H1 (cell line): ENCODE measurements at regions of chr3 and their contacts with region 1.

Region 1: DNA sequence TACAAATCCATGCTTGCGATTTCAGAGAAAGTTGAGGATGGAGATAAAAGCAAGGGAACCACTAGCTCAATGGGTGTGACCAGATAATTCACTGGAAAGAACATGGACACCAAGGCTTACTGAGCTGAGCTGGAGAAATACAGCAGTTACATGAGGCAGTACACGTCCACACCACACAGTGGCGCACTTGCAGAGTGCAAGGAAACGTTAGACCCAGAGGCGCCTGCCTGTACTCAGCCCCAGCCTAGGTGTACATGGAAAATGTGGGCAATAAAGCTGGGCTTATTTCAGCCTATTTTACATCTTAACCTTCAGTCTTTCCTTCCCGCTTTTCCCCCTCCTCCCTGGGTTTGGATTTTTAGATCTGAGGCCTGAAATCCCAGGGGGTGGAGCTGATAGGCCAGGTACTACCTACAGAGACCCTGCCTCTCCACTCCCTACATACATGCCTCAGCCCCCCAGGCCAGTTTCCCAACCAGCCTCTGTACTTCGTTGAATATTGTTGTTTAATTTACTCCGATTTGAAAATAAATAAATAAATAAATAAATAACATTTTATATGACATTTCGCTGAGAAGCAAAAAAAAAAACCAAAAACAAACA is 60.1 kb downstream of the PCOLCE2 start:
- DNase-seq: peak; percentile 47 to 92
- H3K4me3 ChIP-seq: no peak overlapping the region
- H3K27ac ChIP-seq: no peak overlapping the region
- H3K4me1 ChIP-seq: no peaks in the 10 kb centered on the region
- H3K27me3 ChIP-seq: no peaks in the 10 kb centered on the region
- CTCF ChIP-seq: peak; percentile 95 to 99 (median 97)
- EP300 ChIP-seq: no peak
- POLR2A ChIP-seq: no peak
- RAD21 ChIP-seq: peak; percentile 97

Region 2: DNA sequence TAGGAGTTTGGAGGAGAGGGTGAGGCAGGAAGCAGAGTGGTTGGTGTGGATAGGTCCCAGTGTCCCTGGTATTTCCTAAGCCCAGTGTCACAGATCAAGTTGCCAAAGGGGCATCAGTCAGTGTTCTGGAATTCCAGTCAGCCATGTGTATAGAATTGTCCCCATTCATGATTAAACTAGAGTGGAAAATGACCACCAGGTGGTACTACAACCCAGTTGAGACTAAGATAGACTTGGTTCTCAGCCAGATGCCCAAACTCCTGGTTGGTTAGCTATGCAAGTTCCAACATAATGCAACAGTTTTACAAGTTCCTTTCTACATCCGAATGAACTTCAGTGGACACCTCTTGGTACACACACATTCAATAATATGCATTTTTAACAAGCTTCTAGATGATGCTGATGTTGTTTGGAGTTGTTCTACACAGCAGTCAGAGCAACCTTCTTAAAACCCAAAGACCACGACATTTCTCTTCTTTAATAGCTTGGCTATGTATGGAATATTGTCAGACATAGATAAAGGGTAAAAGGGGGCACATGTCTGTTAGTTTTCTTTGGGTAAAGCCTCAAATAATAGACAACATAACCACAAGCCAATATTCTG is 241.9 kb before region 1 on chr3:
- CTCF ChIA-PET with region 1: interaction called, 13 read pairs
- POLR2A ChIA-PET with region 1: no interaction called
- DNase-seq: no peak
- H3K4me3 ChIP-seq: no peak overlapping the region
- H3K27ac ChIP-seq: no peak overlapping the region
- H3K4me1 ChIP-seq: no peaks in the 10 kb centered on the region
- H3K27me3 ChIP-seq: no peaks in the 10 kb centered on the region
- CTCF ChIP-seq: peak in 2 of 3 experiments; percentile 71 to 72; a peak in 3 of 4 replicates
- EP300 ChIP-seq: no peak
- POLR2A ChIP-seq: no peak
- RAD21 ChIP-seq: peak; percentile 86 to 92

Region 3: GRCh38 chr3:142768338-142768737 is 60.5 kb before region 1 on chr3:
- CTCF ChIA-PET with region 1: no interaction called
- POLR2A ChIA-PET with region 1: no interaction called
- DNase-seq: no peak
- H3K4me3 ChIP-seq: no peak overlapping the region
- H3K27ac ChIP-seq: no peak overlapping the region
- H3K4me1 ChIP-seq: no peaks in the 10 kb centered on the region
- H3K27me3 ChIP-seq: no peaks in the 10 kb centered on the region
- CTCF ChIP-seq: no peak
- EP300 ChIP-seq: no peak
- POLR2A ChIP-seq: no peak
- RAD21 ChIP-seq: no peak

Region 4: GRCh38 chr3:142817897-142818296 is 10.9 kb before region 1 on chr3:
- CTCF ChIA-PET with region 1: interaction called, 49 read pairs
- POLR2A ChIA-PET with region 1: no interaction called
- DNase-seq: no peak
- H3K4me3 ChIP-seq: no peak overlapping the region
- H3K27ac ChIP-seq: no peak overlapping the region
- H3K4me1 ChIP-seq: no peaks in the 10 kb centered on the region
- H3K27me3 ChIP-seq: no peaks in the 10 kb centered on the region
- CTCF ChIP-seq: no peak
- EP300 ChIP-seq: no peak
- POLR2A ChIP-seq: no peak
- RAD21 ChIP-seq: no peak

Region 5: GRCh38 chr3:142866841-142867631 is 38.2 kb after region 1 on chr3:
- CTCF ChIA-PET with region 1: interaction called, 12 read pairs
- POLR2A ChIA-PET with region 1: interaction called, 4 read pairs
- DNase-seq: peak; percentile 76 to 84
- H3K4me3 ChIP-seq: peak overlapping the region in 2 of 4 experiments; percentile 23 to 48; a peak in 2 of 8 replicates
- H3K27ac ChIP-seq: no peak overlapping the region
- H3K4me1 ChIP-seq: peaks cover 6 to 27% (median 15%) of the 10 kb centered on the region in 4 experiments
- H3K27me3 ChIP-seq: no peaks in the 10 kb centered on the region
- CTCF ChIP-seq: peak in 2 of 3 experiments; percentile 53 to 71; a peak in 3 of 4 replicates
- EP300 ChIP-seq: no peak; a peak in 1 of 3 replicates
- POLR2A ChIP-seq: peak in 1 of 2 experiments; percentile 38; a peak in 1 of 3 replicates
- RAD21 ChIP-seq: peak; percentile 25 to 38

Region 6: GRCh38 chr3:142904639-142905436 is 76.0 kb after region 1 on chr3:
- CTCF ChIA-PET with region 1: interaction called, 115 read pairs
- POLR2A ChIA-PET with region 1: no interaction called
- DNase-seq: peak in 1 of 2 experiments; percentile 50
- H3K4me3 ChIP-seq: no peak overlapping the region
- H3K27ac ChIP-seq: no peak overlapping the region
- H3K4me1 ChIP-seq: no peaks in the 10 kb centered on the region
- H3K27me3 ChIP-seq: no peaks in the 10 kb centered on the region
- CTCF ChIP-seq: peak in 2 of 3 experiments; percentile 73 to 75; a peak in 3 of 4 replicates
- EP300 ChIP-seq: no peak
- POLR2A ChIP-seq: no peak
- RAD21 ChIP-seq: peak; percentile 92

Region 7: GRCh38 chr3:142976621-142977398 is 148.0 kb after region 1 on chr3:
- CTCF ChIA-PET with region 1: interaction called, 45 read pairs
- POLR2A ChIA-PET with region 1: no interaction called
- DNase-seq: no peak
- H3K4me3 ChIP-seq: no peak overlapping the region
- H3K27ac ChIP-seq: no peak overlapping the region
- H3K4me1 ChIP-seq: no peaks in the 10 kb centered on the region
- H3K27me3 ChIP-seq: no peaks in the 10 kb centered on the region
- CTCF ChIP-seq: no peak
- EP300 ChIP-seq: no peak
- POLR2A ChIP-seq: no peak
- RAD21 ChIP-seq: no peak